PC-3 (cell line): ENCODE measurements at regions of chr4 and their contacts with region 1.

Region 1: DNA sequence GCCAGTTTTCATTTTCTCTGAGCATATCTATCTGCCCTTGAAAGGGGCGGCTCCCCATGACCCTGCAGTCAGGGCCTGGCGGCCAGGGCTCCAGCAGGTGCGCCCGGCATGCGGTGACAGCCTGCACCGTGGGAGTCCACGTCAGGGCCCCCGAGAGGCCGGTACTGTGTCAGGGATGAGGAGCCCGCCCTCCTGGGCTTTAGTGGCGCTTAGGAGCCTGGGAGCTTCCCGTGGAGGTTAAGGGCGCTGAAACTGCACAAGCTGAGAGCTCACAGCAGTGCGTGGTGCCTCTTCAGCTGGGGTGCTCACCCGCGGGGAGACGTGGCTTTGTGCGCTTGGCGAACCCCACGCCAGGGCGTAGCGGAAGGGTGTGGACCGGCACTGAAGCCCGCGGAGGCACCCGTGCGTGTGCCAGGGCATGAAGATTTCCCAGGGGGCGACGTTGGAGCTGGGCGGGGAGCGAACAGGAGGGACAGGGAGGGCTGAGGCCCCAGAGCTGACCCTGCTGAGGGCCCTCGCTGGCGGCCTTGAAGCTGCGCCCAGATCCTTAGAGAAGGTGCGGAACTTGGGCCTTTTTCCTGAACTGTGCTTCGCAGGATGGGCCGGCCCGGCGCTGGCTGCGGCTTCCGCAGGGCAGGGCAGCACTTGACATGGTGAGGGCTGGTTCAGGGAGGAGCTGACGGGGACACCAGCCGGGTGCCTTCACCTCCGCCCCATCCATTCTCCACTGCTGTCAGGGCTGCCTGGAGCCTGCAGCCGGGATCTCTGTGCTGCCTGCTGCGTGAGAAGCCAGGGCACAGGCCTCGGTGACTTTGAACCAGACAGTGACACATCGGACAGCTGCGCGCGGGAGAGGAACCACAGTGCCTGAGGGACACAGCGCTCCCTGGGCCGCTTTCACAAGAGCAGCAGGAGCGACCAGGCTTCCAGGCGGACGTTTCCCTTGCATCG is 32.9 kb downstream of the HTT-AS start:
- DNase-seq: peak; percentile 63
- ATAC-seq: peak; percentile 86
- H3K4me3 ChIP-seq: peak overlapping the region; percentile 74
- H3K27ac ChIP-seq: peak overlapping the region; percentile 81
- H3K4me1 ChIP-seq: peaks cover 16% of the 10 kb centered on the region
- H3K27me3 ChIP-seq: no peaks in the 10 kb centered on the region
- CTCF ChIP-seq: no peak

Region 2: DNA sequence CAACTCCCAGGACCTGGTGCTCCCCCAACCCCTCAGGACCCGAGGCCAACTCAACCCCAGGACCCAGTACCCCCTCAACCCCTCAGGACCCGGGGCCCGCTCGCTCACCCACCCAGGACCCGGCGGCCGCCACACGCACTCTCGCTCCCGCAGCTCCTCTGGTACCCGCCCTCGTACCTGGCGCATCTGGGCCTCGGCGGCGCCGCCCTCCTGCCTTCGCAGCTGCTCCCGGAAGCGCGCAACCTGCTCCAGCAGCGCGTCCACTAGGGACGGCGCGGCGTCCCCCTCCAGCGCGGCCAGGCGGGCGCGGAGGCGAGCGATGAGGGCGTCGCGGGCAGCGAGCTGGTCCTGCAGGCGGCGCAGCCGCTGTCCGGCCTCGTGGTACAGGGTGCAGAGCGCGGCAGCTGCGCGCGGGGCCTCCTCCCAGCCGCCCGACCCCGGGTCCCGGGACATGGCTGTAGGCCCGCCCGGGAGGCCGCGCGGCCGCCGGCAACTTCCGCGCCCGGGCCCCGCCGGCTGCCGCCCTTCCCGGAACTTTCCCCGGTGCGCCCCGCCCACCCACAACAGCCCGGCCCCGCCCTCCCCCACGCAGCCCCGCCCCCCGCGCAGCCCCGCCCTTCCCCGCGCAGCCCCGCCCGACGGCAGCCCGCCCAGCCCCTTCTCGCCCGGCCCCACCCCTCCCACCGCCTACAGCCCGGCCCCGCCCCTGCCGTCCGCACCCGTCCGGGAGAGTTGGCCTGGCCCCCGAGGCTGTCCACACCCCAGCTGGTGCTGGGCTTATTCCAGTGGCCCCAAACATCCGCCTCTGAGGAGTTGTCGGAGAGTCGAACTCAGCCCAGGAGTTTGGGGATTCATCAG is 285.4 kb before region 1 on chr4 and contains the start of gene TNIP2:
- CTCF ChIA-PET with region 1: no interaction called
- POLR2A ChIA-PET with region 1: no interaction called
- intact Hi-C with region 1: no loop called
- DNase-seq: peak; percentile 73
- ATAC-seq: peak; percentile 83
- H3K4me3 ChIP-seq: peak within 1 kb of the TSS; percentile 77
- H3K27ac ChIP-seq: peak within 1 kb of the TSS; percentile 29; the same call in 1 of the 2 replicates
- H3K4me1 ChIP-seq: peaks cover 6% of the 10 kb centered on the region; the same call in 1 of the 2 replicates
- H3K27me3 ChIP-seq: no peaks in the 10 kb centered on the region
- CTCF ChIP-seq: no peak
- total RNA-seq, gene TNIP2: 56.5 and 77.8 TPM in 2 replicates

Region 3: GRCh38 chr4:2963175-2963965 is 78.1 kb before region 1 on chr4 and contains the starts of genes GRK4 and NOP14:
- CTCF ChIA-PET with region 1: interaction called, 4 read pairs
- POLR2A ChIA-PET with region 1: no interaction called
- intact Hi-C with region 1: loop called (anchors 5 kb)
- DNase-seq: peak; percentile 96
- ATAC-seq: peak; percentile 90
- H3K4me3 ChIP-seq: peak within 1 kb of the TSS; percentile 86
- H3K27ac ChIP-seq: peak within 1 kb of the TSS; percentile 59
- H3K4me1 ChIP-seq: peaks cover 6% of the 10 kb centered on the region; the same call in 1 of the 2 replicates
- H3K27me3 ChIP-seq: no peaks in the 10 kb centered on the region
- CTCF ChIP-seq: peak; percentile 27; the same call in 1 of the 2 replicates
- total RNA-seq, gene GRK4: 2.9 and 3.7 TPM in 2 replicates
- total RNA-seq, gene NOP14: 26.0 and 30.9 TPM in 2 replicates

Region 4: GRCh38 chr4:2977211-2978088 is 64.0 kb before region 1 on chr4:
- CTCF ChIA-PET with region 1: interaction called, 3 read pairs
- POLR2A ChIA-PET with region 1: no interaction called
- intact Hi-C with region 1: loop called (anchors 2 kb)
- DNase-seq: peak; percentile 58
- ATAC-seq: peak; percentile 82
- H3K4me3 ChIP-seq: peak overlapping the region; percentile 25; the same call in 1 of the 2 replicates
- H3K27ac ChIP-seq: peak overlapping the region; percentile 89
- H3K4me1 ChIP-seq: peaks cover 18% of the 10 kb centered on the region
- H3K27me3 ChIP-seq: no peaks in the 10 kb centered on the region
- CTCF ChIP-seq: no peak

Region 5: DNA sequence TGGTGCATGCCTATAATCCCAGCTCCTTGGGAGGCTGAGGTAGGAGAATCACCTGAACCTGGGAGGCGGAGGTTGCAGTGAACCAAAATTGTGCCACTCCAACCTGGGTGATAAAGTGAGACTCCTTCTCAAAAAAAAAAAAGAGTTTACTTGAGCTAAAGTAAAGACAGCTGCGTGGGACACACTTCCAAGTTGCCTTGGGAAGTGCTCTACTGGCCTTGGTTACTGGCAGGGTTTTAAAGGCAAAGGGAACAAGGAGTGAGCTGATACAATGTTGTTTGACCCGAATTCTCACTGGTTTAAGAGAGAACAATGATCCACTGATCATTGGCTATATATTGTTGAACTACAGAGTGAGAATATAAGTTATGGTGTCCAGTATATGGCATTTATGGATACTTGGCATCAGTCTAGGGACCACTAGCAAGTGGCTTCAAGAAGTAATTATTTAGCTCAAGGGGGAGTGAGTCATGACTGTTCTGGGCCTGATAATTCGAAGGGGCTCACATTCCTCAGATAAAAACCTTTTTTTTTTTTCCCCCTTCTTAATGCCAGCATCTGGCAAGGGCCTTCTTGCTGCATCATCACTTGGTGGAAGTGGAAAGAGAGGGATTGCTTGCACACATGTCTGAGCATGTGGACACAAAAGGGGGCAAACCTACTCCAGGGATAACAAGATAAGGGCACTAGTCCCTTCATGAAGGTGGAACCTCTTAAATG is 45.8 kb before region 1 on chr4:
- CTCF ChIA-PET with region 1: no interaction called
- POLR2A ChIA-PET with region 1: no interaction called
- intact Hi-C with region 1: no loop called
- DNase-seq: no peak
- ATAC-seq: no peak
- H3K4me3 ChIP-seq: no peak overlapping the region
- H3K27ac ChIP-seq: no peak overlapping the region
- H3K4me1 ChIP-seq: no peaks in the 10 kb centered on the region
- H3K27me3 ChIP-seq: no peaks in the 10 kb centered on the region
- CTCF ChIP-seq: no peak

Region 6: GRCh38 chr4:3074078-3074795 is 32.8 kb after region 1 on chr4 and contains the starts of genes HTT and HTT-AS:
- CTCF ChIA-PET with region 1: no interaction called
- POLR2A ChIA-PET with region 1: no interaction called
- intact Hi-C with region 1: loop called (anchors 2 kb)
- DNase-seq: peak; percentile 92
- ATAC-seq: peak; percentile 92
- H3K4me3 ChIP-seq: peak within 1 kb of the TSS; percentile 98
- H3K27ac ChIP-seq: no peak within 1 kb of the TSS; the same call in 1 of the 2 replicates
- H3K4me1 ChIP-seq: peaks cover 5% of the 10 kb centered on the region; the same call in 1 of the 2 replicates
- H3K27me3 ChIP-seq: no peaks in the 10 kb centered on the region
- CTCF ChIP-seq: no peak
- total RNA-seq, gene HTT: 18.4 and 36.3 TPM in 2 replicates
- total RNA-seq, gene HTT-AS: not detected in 2 replicates